ENCODE measurements at regions of chr10 and their contacts with region 1.

Region 1: DNA sequence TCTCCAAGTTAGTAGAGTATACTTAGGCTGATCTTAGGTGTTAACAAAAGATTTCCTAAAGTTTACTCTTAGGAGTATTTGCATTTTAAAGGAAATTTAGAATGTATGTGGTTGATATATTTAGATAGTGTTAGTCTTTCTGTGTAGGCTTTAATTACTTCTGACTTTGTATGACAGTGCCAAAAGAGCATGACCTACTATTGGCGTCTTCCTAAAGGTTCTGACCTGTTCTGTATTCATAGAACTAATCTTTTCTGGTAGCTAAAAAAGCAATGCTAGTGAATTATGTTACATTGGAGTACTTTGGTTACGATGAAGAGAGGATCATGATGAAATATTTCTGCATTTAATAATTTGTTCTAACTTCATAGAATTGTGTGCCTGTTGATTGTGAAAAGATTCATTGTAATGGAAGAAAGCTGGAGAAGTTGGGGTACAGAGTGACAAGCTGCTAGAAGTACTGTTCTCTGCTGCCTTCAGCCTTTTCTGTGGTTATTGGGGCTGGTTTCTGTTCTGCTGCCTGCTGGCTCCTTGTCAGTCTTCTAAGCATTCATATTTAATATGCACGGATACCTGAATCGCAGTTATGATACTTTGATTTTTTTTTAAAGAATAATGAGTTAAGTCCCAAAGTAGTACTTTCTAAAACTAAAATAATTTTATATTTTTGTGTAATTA is 13.2 kb downstream of the WAC start:
- DNase-seq: no peak
- H3K4me3 ChIP-seq: no peak overlapping the region
- H3K27ac ChIP-seq: no peak overlapping the region
- H3K4me1 ChIP-seq: no peaks in the 10 kb centered on the region
- H3K27me3 ChIP-seq: no peaks in the 10 kb centered on the region
- CTCF ChIP-seq: no peak
- EP300 ChIP-seq: no peak
- POLR2A ChIP-seq: no peak
- RAD21 ChIP-seq: no peak

Region 2: DNA sequence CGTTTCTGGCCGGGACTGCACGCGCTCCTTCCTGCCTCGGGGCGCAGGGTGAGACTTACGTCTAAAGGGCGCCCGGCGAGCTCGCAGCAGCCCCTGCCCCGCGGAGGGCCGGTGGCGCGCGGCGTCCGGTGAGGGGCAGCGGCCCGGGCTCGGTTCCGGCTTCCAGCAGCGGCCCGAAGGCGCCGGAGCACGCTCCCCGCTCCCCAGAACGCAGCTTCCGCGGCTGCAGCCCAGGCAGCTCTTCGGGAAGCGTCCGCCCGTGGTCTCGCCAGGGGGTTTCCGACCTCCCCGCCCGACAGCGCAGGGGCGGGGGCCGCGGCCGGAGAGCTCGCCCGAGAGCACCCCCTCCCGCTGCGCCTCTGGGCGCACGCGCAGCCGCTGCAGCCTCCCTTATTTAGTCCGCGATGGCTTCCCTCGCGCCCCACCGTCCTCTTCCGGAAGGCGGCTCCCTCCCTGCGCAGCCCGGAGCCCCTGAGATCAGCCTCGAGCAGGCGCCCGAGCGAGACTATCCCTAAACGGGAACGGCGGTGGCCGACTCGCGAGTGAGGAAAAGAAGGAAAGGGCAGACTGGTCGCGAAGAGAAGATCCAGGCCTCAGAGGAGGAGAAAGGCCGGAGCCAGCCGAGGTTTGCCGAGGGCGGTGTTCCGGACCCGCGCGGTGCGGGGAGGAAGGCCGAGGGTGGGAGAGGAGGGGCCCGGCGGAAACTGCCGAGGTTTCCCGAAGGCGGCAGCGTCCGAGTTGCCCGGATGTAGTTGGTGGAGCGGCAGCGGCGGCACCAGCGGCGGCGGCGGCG is 13.5 kb before region 1 on chr10 and contains the start of gene WAC:
- CTCF ChIA-PET with region 1: no interaction called
- POLR2A ChIA-PET with region 1: interaction called, 87 read pairs
- DNase-seq: peak; percentile 71 to 99
- H3K4me3 ChIP-seq: peak within 1 kb of the TSS; percentile 74 to 93 (median 82)
- H3K27ac ChIP-seq: peak within 1 kb of the TSS; percentile 99
- H3K4me1 ChIP-seq: no peaks in the 10 kb centered on the region; a peak in 1 of 7 replicates
- H3K27me3 ChIP-seq: no peaks in the 10 kb centered on the region
- CTCF ChIP-seq: no peak
- EP300 ChIP-seq: no peak
- POLR2A ChIP-seq: peak; percentile 85 to 86
- RAD21 ChIP-seq: no peak
- total RNA-seq, gene WAC: 122 and 128 TPM in 2 replicates

Region 3: GRCh38 chr10:28558923-28559508 is 12.9 kb after region 1 on chr10:
- CTCF ChIA-PET with region 1: interaction called, 5 read pairs
- POLR2A ChIA-PET with region 1: interaction called, 39 read pairs
- DNase-seq: no peak
- H3K4me3 ChIP-seq: no peak overlapping the region
- H3K27ac ChIP-seq: no peak overlapping the region
- H3K4me1 ChIP-seq: peaks cover 0 to 18% (median 10%) of the 10 kb centered on the region in 4 experiments; a peak in 4 of 7 replicates
- H3K27me3 ChIP-seq: no peaks in the 10 kb centered on the region
- CTCF ChIP-seq: no peak
- EP300 ChIP-seq: no peak
- POLR2A ChIP-seq: no peak
- RAD21 ChIP-seq: no peak